Panc1 (cell line): ENCODE measurements at regions of chrX and their contacts with region 1.

Region 1: GRCh38 chrX:65985922-65986588 is 53.8 kb downstream of the VSIG4 start:
- DNase-seq: peak; percentile 24
- ATAC-seq: peak; percentile 90
- H3K4me3 ChIP-seq: no peak overlapping the region
- H3K27ac ChIP-seq: no peak overlapping the region
- H3K4me1 ChIP-seq: no peaks in the 10 kb centered on the region
- H3K27me3 ChIP-seq: no peaks in the 10 kb centered on the region
- CTCF ChIP-seq: peak; percentile 62

Region 2: DNA sequence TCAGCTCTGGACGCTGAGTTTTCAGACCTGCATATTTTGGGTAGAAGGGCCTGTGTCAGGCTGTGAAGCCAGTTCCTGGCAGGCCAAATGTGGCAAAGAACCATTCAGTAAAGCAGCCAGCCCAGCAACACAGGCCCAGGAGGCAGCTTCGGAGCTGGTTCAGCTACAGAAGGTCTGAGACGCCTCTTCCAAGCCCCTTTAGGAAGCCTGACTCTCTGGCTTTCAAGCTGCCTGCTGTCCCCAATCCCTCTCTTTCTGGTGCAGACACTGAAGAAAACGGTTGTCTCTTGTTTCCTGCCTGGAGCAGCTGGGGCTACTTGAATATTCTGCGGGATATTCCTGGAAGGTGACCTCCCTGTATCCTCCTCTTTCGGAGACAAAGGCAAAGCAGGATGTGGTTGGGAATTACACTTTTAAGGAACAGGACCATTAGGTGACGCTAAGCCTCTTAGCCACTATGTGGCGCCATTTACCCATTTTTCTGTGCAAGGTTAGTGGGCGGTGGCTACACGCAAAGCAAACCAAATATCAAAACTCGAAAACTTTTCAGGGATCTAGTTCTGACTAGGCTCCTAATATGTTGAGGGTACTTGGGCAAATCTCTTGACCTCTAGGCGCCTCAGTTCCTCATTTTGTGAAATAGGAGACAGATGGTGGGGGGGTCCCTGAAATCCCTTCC is 404.3 kb before region 1 on chrX:
- CTCF ChIA-PET with region 1: no interaction called
- POLR2A ChIA-PET with region 1: no interaction called
- in situ Hi-C with region 1: no loop called
- intact Hi-C with region 1: loop called (anchors 5 kb)
- DNase-seq: no peak
- ATAC-seq: peak; percentile 94
- H3K4me3 ChIP-seq: no peak overlapping the region
- H3K27ac ChIP-seq: no peak overlapping the region
- H3K4me1 ChIP-seq: no peaks in the 10 kb centered on the region; the same call in 1 of the 2 replicates
- H3K27me3 ChIP-seq: no peaks in the 10 kb centered on the region; the same call in 1 of the 2 replicates
- CTCF ChIP-seq: peak; percentile 76

Region 3: DNA sequence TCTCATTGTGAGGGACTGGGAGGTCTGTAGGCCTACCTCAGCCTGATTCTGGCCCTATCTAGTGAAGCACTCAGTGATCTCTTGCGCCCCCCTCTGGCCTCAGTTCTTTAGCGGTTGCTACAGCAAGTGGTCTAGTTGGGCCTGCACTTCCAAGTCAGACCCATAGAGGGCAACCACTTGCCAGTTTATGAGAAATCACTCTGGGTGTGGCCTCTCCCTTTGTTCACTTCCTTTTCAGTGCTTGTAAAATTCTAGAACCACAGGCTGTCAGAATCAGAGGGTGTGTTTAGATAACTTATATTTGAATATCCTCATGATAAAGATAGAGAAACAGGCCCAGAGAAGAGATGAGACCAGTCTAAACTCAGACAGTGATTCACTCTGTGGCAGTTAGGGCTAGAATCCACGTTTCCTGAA is 390.6 kb before region 1 on chrX:
- CTCF ChIA-PET with region 1: no interaction called
- POLR2A ChIA-PET with region 1: no interaction called
- in situ Hi-C with region 1: no loop called
- intact Hi-C with region 1: loop called (anchors 5 kb)
- DNase-seq: peak; percentile 84
- ATAC-seq: peak; percentile 94
- H3K4me3 ChIP-seq: no peak overlapping the region
- H3K27ac ChIP-seq: peak overlapping the region; percentile 57; the same call in 1 of the 2 replicates
- H3K4me1 ChIP-seq: no peaks in the 10 kb centered on the region; the same call in 1 of the 2 replicates
- H3K27me3 ChIP-seq: no peaks in the 10 kb centered on the region
- CTCF ChIP-seq: peak; percentile 96

Region 4: GRCh38 chrX:65750674-65751469 is 235.2 kb before region 1 on chrX:
- CTCF ChIA-PET with region 1: no interaction called
- POLR2A ChIA-PET with region 1: interaction called, 3 read pairs
- in situ Hi-C with region 1: no loop called
- intact Hi-C with region 1: loop called (anchors 10 kb)
- DNase-seq: no peak
- ATAC-seq: no peak
- H3K4me3 ChIP-seq: no peak overlapping the region
- H3K27ac ChIP-seq: no peak overlapping the region
- H3K4me1 ChIP-seq: no peaks in the 10 kb centered on the region
- H3K27me3 ChIP-seq: no peaks in the 10 kb centered on the region
- CTCF ChIP-seq: no peak

Region 5: DNA sequence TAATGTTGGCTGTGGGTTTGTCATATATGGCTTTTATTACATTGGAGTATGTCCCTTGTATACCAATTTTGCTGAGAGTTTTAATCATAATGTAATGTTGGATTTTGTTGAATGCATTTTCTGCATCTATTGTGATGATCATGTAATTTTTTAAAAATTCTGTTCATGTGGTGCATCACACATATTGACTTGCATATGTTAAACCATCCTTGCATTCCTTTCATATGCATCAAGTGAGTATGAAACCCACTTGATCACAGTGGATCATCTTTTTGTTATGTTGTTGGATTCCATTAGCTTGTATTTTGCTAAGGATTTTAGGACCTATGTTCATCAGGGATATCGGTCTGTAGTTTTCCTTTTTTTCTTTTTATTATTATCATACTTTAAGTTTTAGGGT is 190.1 kb after region 1 on chrX:
- CTCF ChIA-PET with region 1: no interaction called
- POLR2A ChIA-PET with region 1: no interaction called
- in situ Hi-C with region 1: no loop called
- intact Hi-C with region 1: no loop called
- DNase-seq: no peak
- ATAC-seq: no peak
- H3K4me3 ChIP-seq: no peak overlapping the region
- H3K27ac ChIP-seq: no peak overlapping the region
- H3K4me1 ChIP-seq: no peaks in the 10 kb centered on the region
- H3K27me3 ChIP-seq: no peaks in the 10 kb centered on the region
- CTCF ChIP-seq: no peak